Mammary epithelial cell (primary cell): ENCODE measurements at regions of chr1 and their contacts with region 1.

Region 1: DNA sequence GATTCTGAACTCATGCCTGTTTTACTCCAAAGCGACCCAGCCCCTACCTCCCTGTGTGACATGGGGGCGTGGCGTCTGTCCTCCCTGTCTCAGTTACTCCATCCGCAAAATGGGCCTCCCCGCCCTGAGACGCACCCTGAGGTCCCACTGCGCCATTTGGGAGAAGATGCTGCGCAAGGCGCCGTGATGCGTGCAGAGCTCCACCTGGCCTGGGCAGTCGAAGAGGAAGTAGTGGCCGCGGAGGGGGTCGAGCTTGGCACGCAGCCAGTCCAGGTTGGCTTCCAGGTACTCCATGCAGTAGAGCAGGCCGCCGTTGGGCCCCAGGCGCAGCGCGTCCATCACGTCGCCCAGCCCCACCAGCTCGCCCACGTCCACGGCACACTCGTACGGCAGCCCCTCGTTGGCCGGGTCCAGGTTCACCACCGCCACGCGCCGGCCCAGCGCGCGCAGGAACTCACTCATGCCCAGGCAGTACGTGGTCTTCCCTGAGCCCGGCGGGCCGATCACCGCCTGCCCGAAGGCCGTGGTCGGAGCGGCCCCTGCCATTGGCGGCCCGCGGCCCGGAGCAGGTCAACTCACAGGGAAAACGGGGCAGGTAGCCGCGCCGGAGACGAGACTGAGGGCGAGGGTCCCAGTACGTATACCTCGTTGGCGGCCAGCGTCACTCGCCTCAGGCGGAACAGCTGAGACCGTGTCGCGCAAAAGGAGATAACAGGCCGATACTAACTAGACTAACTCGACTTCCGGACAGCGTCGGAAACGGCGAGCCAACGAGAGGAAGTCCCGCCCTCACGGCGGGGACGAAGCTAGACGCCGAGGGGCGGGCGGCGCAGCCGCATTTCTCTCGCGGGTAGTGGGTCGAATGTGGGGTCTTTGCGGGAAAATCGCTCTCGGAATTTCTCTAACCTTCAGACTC is at the start of gene GPN2:
- DNase-seq: peak; percentile 68
- H3K4me3 ChIP-seq: peak within 1 kb of the TSS; percentile 72 to 86 (median 74)
- H3K27ac ChIP-seq: peak within 1 kb of the TSS; percentile 86
- H3K4me1 ChIP-seq: peaks cover 30% of the 10 kb centered on the region
- H3K27me3 ChIP-seq: no peaks in the 10 kb centered on the region
- CTCF ChIP-seq: no peak
- total RNA-seq, gene GPN2: 14.7 to 48.3 TPM

Region 2: DNA sequence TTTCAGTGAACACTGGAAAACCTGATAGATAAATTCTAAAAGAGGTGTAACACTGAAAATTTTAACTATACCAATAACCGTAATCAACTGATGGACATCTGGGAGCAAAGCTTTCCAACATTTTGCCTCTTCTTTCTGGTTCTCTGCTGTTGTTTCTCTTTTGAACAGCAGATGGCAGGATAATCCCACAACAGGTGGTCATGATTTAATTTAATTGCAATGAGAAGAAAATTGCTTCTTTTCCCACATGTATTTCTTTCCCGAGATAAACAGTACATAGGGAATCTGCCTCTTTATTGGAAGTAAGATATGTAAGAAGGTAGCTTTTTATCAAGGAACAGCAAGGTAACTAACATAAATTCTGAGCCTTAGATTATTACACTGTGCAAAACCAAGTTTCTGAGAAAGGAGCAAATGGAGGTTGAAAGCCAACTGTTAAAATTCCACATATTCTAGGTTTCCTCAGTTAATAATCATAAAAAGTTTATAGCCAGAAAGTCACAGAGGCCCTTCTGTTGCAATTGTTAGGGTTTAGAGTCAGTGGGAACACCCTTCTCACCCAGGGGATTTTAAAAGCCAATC is 287.3 kb before region 1 on chr1:
- CTCF ChIA-PET with region 1: no interaction called
- dilution Hi-C with region 1: loop called (anchors 5 kb)
- in situ Hi-C with region 1: loop called in 1 of 2 experiments (anchors 10 kb)
- intact Hi-C with region 1: no loop called
- DNase-seq: peak; percentile 48
- H3K4me3 ChIP-seq: no peak overlapping the region
- H3K27ac ChIP-seq: no peak overlapping the region
- H3K4me1 ChIP-seq: no peaks in the 10 kb centered on the region
- H3K27me3 ChIP-seq: no peaks in the 10 kb centered on the region
- CTCF ChIP-seq: peak; percentile 81 to 82

Region 3: GRCh38 chr1:26645734-26646133 is 244.1 kb before region 1 on chr1:
- CTCF ChIA-PET with region 1: no interaction called
- dilution Hi-C with region 1: no loop called
- in situ Hi-C with region 1: no loop called
- intact Hi-C with region 1: no loop called
- DNase-seq: no peak
- H3K4me3 ChIP-seq: no peak overlapping the region
- H3K27ac ChIP-seq: no peak overlapping the region
- H3K4me1 ChIP-seq: no peaks in the 10 kb centered on the region
- H3K27me3 ChIP-seq: no peaks in the 10 kb centered on the region
- CTCF ChIP-seq: no peak

Region 4: GRCh38 chr1:26787706-26788514 is 101.9 kb before region 1 on chr1 and contains the start of gene PIGV:
- CTCF ChIA-PET with region 1: no interaction called
- dilution Hi-C with region 1: loop called (anchors 5 kb)
- in situ Hi-C with region 1: no loop called
- intact Hi-C with region 1: no loop called
- DNase-seq: peak; percentile 78
- H3K4me3 ChIP-seq: peak within 1 kb of the TSS; percentile 61 to 80 (median 74)
- H3K27ac ChIP-seq: peak within 1 kb of the TSS; percentile 93
- H3K4me1 ChIP-seq: peaks cover 26% of the 10 kb centered on the region
- H3K27me3 ChIP-seq: no peaks in the 10 kb centered on the region
- CTCF ChIP-seq: peak in 1 of 2 donors; percentile 12
- total RNA-seq, gene PIGV: 18.0 to 19.2 TPM

Region 5: GRCh38 chr1:26864610-26865527 is 24.9 kb before region 1 on chr1:
- CTCF ChIA-PET with region 1: interaction called, 6 read pairs
- dilution Hi-C with region 1: no loop called
- in situ Hi-C with region 1: no loop called
- intact Hi-C with region 1: loop called (anchors 2 kb)
- DNase-seq: peak; percentile 98
- H3K4me3 ChIP-seq: peak overlapping the region; percentile 53 to 99 (median 82)
- H3K27ac ChIP-seq: peak overlapping the region; percentile 98
- H3K4me1 ChIP-seq: peaks cover 36% of the 10 kb centered on the region
- H3K27me3 ChIP-seq: no peaks in the 10 kb centered on the region
- CTCF ChIP-seq: peak in 1 of 2 donors; percentile 1

Region 6: DNA sequence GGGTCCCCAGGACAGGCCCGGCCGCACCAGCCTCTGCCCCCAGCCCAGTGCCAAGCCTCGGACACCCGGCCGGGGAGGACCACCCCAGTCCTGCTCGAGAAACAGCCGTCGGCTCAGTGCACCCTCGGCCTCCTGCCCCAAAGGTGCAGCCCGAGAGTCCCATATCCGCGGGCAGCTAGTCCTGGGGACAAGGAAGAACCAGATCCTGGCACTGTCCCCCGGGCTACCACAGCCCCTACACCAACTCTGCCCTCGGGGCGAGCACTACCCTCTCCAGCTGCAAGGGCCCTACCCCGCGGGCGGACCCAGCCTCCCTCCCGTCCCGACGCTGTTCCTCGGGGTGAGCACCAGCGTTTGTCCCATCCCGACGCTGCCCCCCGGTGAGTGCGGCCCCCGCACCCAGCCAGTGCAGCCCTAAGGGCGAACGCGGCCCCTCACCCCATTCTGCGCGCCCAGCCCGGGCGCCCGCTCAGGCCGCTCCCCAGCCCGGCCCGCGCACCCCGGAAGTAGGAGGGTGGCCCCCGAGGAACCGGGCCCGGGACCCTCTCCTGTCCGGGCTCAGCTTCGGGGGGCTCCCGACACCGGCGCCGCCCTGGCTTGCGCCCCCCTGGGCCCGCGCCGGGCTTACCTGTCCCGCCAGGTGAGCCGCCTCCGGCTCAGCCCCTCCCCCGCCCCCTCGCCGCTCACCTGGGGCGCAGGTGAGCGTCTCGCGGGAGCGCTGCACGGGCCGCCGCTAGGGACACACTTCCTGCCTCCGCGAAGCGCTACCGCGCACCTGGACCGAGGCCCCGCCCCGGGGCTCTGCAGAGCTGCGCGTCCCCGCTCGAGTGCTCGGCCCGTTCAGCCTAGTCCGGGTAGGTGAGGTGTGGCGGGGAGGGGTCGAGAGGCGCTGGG is 70.2 kb after region 1 on chr1 and contains the start of gene KDF1:
- CTCF ChIA-PET with region 1: no interaction called
- dilution Hi-C with region 1: no loop called
- in situ Hi-C with region 1: no loop called
- intact Hi-C with region 1: loop called (anchors 2 kb)
- DNase-seq: peak; percentile 87
- H3K4me3 ChIP-seq: peak within 1 kb of the TSS; percentile 92 to 99 (median 98)
- H3K27ac ChIP-seq: peak within 1 kb of the TSS; percentile 85
- H3K4me1 ChIP-seq: peaks cover 33% of the 10 kb centered on the region
- H3K27me3 ChIP-seq: no peaks in the 10 kb centered on the region
- CTCF ChIP-seq: no peak
- total RNA-seq, gene KDF1: 15.2 to 24.7 TPM

Region 7: DNA sequence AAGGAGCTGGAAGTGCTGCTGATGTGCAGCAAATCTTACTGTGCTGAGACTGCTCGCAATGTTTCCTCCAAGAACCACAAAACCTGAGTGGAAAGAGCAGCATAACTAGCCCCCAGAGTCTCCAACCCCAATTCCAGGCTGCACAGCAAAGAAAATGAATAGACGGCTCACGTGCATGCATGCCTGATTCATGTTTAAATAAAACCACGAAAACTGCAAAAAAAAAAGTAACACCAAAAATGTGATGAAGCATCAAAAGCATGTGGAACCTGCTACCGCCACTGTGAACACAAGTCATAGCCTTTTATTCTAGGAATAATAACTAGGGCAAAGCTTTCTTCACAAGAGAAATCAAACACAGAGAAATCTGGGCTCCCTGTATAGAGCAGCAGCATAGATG is 94.1 kb after region 1 on chr1:
- CTCF ChIA-PET with region 1: no interaction called
- dilution Hi-C with region 1: loop called (anchors 5 kb)
- in situ Hi-C with region 1: no loop called
- intact Hi-C with region 1: no loop called
- DNase-seq: no peak
- H3K4me3 ChIP-seq: no peak overlapping the region
- H3K27ac ChIP-seq: no peak overlapping the region
- H3K4me1 ChIP-seq: no peaks in the 10 kb centered on the region
- H3K27me3 ChIP-seq: no peaks in the 10 kb centered on the region
- CTCF ChIP-seq: no peak

Region 8: DNA sequence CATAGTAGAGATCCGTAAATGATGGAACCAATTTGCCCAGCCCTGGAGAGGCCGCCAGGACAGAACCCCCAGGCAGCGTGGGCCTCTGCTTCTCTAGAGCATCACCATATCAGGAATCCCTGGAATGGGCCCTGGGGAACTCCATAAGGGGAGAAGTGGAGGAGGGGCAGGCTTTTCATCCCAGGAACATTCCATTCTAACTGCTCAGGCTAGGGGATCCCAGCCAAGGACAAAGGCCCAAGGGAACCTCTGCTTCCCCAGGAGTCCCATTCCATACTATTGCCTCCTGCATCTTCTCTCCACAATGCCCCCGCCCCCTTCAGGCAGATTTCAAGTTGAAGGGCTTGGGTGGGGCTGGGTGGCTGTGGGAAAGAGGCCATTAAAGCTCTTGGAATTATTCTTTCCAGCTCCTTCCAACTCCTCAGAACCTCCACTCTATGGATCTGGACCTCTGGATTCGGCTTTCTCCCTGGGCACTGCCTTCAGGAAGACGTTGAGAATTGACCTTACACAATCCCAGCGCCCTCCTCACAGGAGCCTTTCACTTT is 109.7 kb after region 1 on chr1:
- CTCF ChIA-PET with region 1: no interaction called
- dilution Hi-C with region 1: no loop called
- in situ Hi-C with region 1: no loop called
- intact Hi-C with region 1: loop called (anchors 5 kb)
- DNase-seq: peak; percentile 94
- H3K4me3 ChIP-seq: no peak overlapping the region
- H3K27ac ChIP-seq: peak overlapping the region; percentile 96
- H3K4me1 ChIP-seq: peaks cover 88% of the 10 kb centered on the region
- H3K27me3 ChIP-seq: no peaks in the 10 kb centered on the region
- CTCF ChIP-seq: peak in 1 of 2 donors; percentile 15

Region 9: DNA sequence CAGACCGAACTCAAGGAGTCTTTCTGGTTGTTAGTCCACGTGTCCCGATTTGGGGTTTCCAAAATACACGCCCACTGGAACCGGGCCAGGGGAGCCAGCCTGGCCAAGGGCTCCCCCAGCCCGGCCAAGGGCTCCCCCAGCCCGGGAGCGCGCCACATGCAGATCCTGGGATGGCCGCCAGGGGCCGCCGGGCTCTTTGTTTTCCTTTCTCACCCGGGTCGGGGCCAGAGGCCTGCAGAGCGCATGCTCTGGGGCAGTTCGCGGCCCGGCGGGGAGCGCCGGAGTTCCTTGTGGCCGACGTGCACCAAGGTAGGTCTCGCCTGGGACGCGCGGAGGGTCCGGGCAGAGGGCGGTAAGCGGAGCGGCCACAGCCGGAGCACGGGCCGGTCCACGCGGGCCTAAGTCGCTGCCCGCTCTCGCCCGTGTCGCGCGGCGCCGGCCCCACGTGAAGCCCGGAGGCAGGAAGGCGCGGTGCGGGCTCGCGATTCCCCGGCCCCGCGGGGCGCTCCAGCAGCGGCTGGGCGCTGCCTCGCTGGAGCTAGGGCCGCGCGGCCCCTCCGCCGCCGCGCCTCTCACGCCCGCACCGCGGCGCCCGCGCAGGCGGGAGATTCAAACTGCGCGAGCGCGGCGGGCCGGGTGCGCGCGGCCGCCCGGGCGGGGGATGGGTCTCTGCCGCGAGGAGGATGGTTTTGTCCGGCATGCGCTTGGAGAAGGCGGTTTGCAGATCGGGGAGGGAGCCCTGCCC is 1628.4 kb after region 1 on chr1:
- CTCF ChIA-PET with region 1: no interaction called
- dilution Hi-C with region 1: no loop called
- in situ Hi-C with region 1: no loop called
- intact Hi-C with region 1: no loop called
- DNase-seq: peak; percentile 85
- H3K4me3 ChIP-seq: peak overlapping the region; percentile 60 to 68 (median 61)
- H3K27ac ChIP-seq: peak overlapping the region; percentile 57
- H3K4me1 ChIP-seq: peaks cover 12% of the 10 kb centered on the region
- H3K27me3 ChIP-seq: no peaks in the 10 kb centered on the region
- CTCF ChIP-seq: peak; percentile 63 to 98